HEK293 (cell line): ENCODE measurements at regions of chr9 and their contacts with region 1.

Region 1: GRCh38 chr9:20622330-20623020 is at the start of gene MLLT3:
- H3K4me3 ChIP-seq: peak within 1 kb of the TSS; percentile 86
- H3K27ac ChIP-seq: peak within 1 kb of the TSS; percentile 99
- H3K4me1 ChIP-seq: peaks cover 15% of the 10 kb centered on the region
- CTCF ChIP-seq: no peak

Region 2: DNA sequence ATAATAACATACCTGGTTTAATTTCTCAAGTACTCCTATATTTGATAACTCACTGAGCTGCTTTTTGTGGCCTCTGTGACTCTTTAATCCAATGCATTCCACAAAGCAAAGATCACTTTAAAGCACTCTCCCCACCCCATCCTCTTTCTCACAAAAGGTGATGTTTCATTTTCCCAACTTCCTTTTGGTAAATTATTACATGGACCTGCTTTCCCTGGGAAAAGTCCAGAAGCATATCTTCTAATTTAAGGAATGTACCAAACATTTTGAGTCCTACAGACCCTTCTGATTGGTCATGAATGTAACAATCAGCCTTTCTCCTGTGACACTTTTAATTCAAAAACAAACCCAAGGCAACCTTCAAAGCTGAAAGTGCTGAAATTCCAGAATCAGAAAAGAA is 71.2 kb before region 1 on chr9:
- CTCF ChIA-PET with region 1: interaction called, 6 read pairs
- POLR2A ChIA-PET with region 1: interaction called, 11 read pairs
- H3K4me3 ChIP-seq: no peak overlapping the region
- H3K27ac ChIP-seq: no peak overlapping the region
- H3K4me1 ChIP-seq: peaks cover 28% of the 10 kb centered on the region
- CTCF ChIP-seq: no peak

Region 3: GRCh38 chr9:20604562-20604961 is 17.9 kb before region 1 on chr9:
- CTCF ChIA-PET with region 1: interaction called, 12 read pairs
- POLR2A ChIA-PET with region 1: interaction called, 12 read pairs
- H3K4me3 ChIP-seq: no peak overlapping the region; the same call in 1 of the 2 replicates
- H3K27ac ChIP-seq: no peak overlapping the region
- H3K4me1 ChIP-seq: peaks cover 48% of the 10 kb centered on the region
- CTCF ChIP-seq: no peak

Region 4: DNA sequence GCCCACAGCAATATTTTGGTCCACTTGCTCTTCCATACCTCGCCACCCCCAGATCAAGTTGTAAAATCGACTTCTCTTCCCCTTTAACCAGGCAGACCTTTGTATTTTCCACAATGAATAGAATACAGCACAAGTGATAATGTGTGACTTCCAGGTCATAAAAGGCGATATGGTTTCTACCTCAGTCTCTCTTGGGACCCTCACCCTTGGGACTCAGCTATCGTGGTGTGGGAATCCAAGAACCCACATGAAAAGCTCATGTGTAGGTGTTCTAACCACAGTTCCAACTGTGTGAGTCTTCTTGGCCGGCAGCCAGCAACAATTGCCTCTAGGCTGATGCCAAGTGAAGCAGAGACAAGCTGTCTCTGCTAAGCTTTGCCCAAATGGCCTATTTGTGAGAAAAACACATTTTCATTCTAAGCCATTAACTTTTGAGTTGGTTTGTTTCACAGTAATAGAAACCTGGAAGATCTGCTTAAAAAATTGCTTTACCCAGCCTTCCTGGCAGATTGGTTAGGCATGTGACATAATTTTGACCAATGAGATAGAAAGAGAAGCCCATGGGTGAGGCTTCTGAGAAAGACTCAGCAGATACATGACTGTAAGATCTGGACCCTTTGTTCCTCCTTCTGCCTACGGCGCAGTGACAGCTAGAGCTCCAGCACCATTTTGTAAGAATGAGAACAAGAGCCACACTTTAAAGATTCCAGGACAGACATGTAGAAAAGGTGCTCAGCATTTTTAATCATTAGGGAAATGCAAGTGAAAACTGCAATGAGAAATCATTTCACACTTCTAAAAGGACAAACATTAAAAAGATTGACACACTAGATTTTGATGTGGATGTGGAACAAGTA is 18.1 kb after region 1 on chr9:
- CTCF ChIA-PET with region 1: interaction called, 29 read pairs
- POLR2A ChIA-PET with region 1: interaction called, 15 read pairs
- H3K4me3 ChIP-seq: no peak overlapping the region
- H3K27ac ChIP-seq: peak overlapping the region; percentile 66
- H3K4me1 ChIP-seq: peaks cover 15% of the 10 kb centered on the region; the same call in 1 of the 2 replicates
- CTCF ChIP-seq: no peak

Region 5: DNA sequence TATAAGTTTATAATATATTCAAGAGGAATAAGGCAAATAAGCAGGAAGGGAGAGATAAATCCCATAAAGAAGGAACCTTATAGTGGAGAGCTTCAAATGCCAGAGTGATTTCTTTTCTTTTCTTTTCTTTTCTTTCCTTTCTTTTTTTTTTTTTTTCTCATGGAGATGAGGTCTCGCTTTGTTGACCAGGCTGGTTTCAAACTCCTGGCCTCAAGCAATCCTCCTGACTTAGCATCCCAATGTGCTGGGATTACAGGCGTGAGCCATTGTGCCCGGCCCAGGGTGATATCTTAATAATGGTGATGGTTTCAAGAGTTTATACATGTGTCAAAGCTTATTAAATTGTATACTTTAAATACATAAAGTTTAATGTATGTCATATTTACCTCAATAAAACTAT is 42.0 kb after region 1 on chr9:
- CTCF ChIA-PET with region 1: interaction called, 13 read pairs
- POLR2A ChIA-PET with region 1: no interaction called
- H3K4me3 ChIP-seq: no peak overlapping the region
- H3K27ac ChIP-seq: no peak overlapping the region
- H3K4me1 ChIP-seq: peaks cover 11% of the 10 kb centered on the region
- CTCF ChIP-seq: no peak

Region 6: GRCh38 chr9:20941174-20941690 is 318.8 kb after region 1 on chr9:
- CTCF ChIA-PET with region 1: interaction called, 53 read pairs
- POLR2A ChIA-PET with region 1: interaction called, 6 read pairs
- H3K4me3 ChIP-seq: no peak overlapping the region
- H3K27ac ChIP-seq: no peak overlapping the region
- H3K4me1 ChIP-seq: no peaks in the 10 kb centered on the region
- CTCF ChIP-seq: 0 out of 2 replicates have a peak, but pooled peaks have one; percentile 39